ENCODE measurements at regions of chr20 and their contacts with region 1.

Region 1: GRCh38 chr20:56974499-56975236 is 291.8 kb downstream of the BMP7 start:
- DNase-seq: peak; percentile 80
- ATAC-seq: peak; percentile 72
- H3K4me3 Mint-ChIP-seq: peak overlapping the region; percentile 39
- H3K27ac Mint-ChIP-seq: no peak overlapping the region
- H3K4me1 Mint-ChIP-seq: peaks cover 43% of the 10 kb centered on the region
- H3K27me3 Mint-ChIP-seq: peaks cover 28% of the 10 kb centered on the region
- CTCF ChIP-seq: peak; percentile 62

Region 2: GRCh38 chr20:56554869-56555268 is 419.8 kb before region 1 on chr20:
- CTCF ChIA-PET with region 1: interaction called, 13 read pairs
- POLR2A ChIA-PET with region 1: no interaction called
- DNase-seq: no peak
- ATAC-seq: peak; percentile 73
- H3K4me3 Mint-ChIP-seq: no peak overlapping the region
- H3K27ac Mint-ChIP-seq: peak overlapping the region; percentile 9; the same call in 1 of the 2 replicates
- H3K4me1 Mint-ChIP-seq: peaks cover 8% of the 10 kb centered on the region
- H3K27me3 Mint-ChIP-seq: no peaks in the 10 kb centered on the region
- CTCF ChIP-seq: no peak

Region 3: GRCh38 chr20:56636716-56637115 is 338.0 kb before region 1 on chr20:
- CTCF ChIA-PET with region 1: interaction called, 10 read pairs
- POLR2A ChIA-PET with region 1: no interaction called
- DNase-seq: no peak
- ATAC-seq: no peak
- H3K4me3 Mint-ChIP-seq: no peak overlapping the region
- H3K27ac Mint-ChIP-seq: no peak overlapping the region
- H3K4me1 Mint-ChIP-seq: peaks cover 67% of the 10 kb centered on the region
- H3K27me3 Mint-ChIP-seq: peaks cover 23% of the 10 kb centered on the region
- CTCF ChIP-seq: no peak

Region 4: DNA sequence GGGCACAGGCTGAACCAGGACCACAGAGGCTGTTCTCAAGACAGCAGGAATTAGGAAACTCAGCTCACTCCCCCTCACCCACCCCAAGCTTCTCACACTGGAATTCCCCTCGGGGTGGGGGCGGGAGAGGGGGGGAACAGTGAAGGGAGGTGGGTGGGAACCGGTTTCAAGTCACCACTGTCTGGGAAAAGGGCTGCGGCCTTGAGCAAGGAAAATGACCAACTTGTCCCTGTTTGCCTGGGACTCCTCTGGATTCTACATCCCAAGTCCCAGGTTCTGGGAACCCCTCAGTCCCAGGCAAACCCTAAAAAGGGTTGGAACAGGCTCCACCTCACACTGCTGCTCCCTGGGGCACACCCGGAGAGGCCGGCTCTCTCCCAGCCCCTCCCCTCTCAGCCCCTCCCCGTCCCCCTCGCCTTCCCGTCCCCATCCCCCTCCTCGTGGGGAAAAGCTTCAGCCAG is 114.8 kb before region 1 on chr20:
- CTCF ChIA-PET with region 1: interaction called, 15 read pairs
- POLR2A ChIA-PET with region 1: no interaction called
- DNase-seq: peak; percentile 40
- ATAC-seq: peak; percentile 89
- H3K4me3 Mint-ChIP-seq: peak overlapping the region; percentile 49
- H3K27ac Mint-ChIP-seq: no peak overlapping the region
- H3K4me1 Mint-ChIP-seq: peaks cover 41% of the 10 kb centered on the region
- H3K27me3 Mint-ChIP-seq: peaks cover 20% of the 10 kb centered on the region
- CTCF ChIP-seq: no peak

Region 5: DNA sequence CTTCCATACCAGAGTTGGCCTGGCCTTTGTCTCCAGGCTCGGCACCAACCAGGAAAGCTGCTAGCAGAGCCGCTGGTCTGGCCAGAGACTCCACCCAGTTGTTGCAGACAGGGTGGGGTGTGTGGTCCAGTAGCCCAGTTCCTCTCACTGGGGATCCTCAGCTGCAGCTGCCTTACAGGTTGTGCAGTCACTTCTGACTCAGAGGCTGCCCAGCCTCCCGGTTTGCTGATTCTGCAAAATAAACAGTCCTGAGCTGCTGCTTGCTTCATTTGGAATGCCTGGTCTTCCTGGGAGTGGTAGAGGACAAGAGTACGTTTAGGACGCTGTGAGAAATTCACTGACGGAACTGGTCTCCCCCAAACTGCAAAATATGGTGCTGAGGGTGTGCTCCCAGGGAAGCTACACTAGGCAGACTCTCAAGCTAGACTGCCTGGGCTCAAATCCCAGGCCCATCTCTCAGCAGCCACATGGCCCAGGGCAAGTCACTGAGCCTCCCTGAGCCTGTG is 99.6 kb before region 1 on chr20:
- CTCF ChIA-PET with region 1: interaction called, 16 read pairs
- POLR2A ChIA-PET with region 1: no interaction called
- DNase-seq: peak; percentile 30
- ATAC-seq: peak; percentile 82
- H3K4me3 Mint-ChIP-seq: no peak overlapping the region
- H3K27ac Mint-ChIP-seq: no peak overlapping the region; the same call in 1 of the 2 replicates
- H3K4me1 Mint-ChIP-seq: peaks cover 23% of the 10 kb centered on the region
- H3K27me3 Mint-ChIP-seq: peaks cover 6% of the 10 kb centered on the region
- CTCF ChIP-seq: no peak

Region 6: GRCh38 chr20:56985286-56985685 is 10.6 kb after region 1 on chr20:
- CTCF ChIA-PET with region 1: interaction called, 16 read pairs
- POLR2A ChIA-PET with region 1: no interaction called
- DNase-seq: no peak
- ATAC-seq: no peak
- H3K4me3 Mint-ChIP-seq: no peak overlapping the region
- H3K27ac Mint-ChIP-seq: no peak overlapping the region
- H3K4me1 Mint-ChIP-seq: peaks cover 5% of the 10 kb centered on the region; the same call in 1 of the 2 replicates
- H3K27me3 Mint-ChIP-seq: peaks cover 6% of the 10 kb centered on the region; the same call in 1 of the 2 replicates
- CTCF ChIP-seq: no peak

Region 7: DNA sequence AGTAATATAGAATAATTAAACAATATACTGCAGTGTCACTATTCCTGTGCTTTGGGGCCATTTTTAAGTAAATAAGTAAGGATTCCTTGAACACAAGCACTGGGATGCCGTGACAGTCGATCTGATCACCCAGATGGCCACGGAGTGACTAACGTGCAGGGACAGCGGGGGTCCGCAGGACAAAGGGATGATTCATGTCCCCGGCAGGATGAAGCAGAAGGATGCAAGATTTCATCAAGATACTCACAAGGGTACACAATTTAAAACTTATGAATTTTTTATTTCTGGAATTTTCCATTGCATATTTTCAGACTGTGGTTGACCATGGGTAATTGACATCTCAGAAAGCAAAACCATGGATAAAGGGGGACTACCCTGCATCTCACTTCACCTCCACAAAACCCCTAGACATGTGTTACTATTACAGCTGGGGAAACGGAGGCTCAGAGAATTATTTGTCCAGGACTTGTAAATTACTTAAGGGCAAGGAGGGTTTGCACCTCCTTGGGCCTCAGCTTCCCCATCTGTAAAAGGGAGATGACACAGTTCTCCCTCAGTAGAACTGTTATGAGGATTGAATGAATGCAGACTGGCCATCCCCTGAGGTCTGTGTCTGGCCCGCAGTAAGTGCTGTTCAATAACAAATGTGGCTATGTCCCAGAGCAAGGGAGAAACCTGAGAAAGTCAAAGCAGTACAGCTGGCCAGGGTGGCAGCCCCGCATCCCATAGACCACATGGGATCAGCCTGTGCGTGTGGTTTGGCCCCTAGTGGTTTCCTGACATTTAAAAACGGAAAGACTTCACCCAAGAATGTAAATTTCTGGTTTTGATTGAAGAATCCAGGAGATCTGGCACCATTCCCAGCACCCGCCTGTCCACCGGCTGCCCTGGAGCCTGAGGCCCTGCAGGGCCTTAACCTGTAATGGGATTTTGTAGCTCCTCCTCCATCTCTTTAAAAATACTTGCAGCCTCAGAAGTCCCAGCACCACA is 56.2 kb after region 1 on chr20:
- CTCF ChIA-PET with region 1: no interaction called
- POLR2A ChIA-PET with region 1: no interaction called
- DNase-seq: no peak
- ATAC-seq: no peak
- H3K4me3 Mint-ChIP-seq: no peak overlapping the region
- H3K27ac Mint-ChIP-seq: no peak overlapping the region
- H3K4me1 Mint-ChIP-seq: peaks cover 28% of the 10 kb centered on the region
- H3K27me3 Mint-ChIP-seq: peaks cover 2% of the 10 kb centered on the region; the same call in 1 of the 2 replicates
- CTCF ChIP-seq: no peak

Region 8: DNA sequence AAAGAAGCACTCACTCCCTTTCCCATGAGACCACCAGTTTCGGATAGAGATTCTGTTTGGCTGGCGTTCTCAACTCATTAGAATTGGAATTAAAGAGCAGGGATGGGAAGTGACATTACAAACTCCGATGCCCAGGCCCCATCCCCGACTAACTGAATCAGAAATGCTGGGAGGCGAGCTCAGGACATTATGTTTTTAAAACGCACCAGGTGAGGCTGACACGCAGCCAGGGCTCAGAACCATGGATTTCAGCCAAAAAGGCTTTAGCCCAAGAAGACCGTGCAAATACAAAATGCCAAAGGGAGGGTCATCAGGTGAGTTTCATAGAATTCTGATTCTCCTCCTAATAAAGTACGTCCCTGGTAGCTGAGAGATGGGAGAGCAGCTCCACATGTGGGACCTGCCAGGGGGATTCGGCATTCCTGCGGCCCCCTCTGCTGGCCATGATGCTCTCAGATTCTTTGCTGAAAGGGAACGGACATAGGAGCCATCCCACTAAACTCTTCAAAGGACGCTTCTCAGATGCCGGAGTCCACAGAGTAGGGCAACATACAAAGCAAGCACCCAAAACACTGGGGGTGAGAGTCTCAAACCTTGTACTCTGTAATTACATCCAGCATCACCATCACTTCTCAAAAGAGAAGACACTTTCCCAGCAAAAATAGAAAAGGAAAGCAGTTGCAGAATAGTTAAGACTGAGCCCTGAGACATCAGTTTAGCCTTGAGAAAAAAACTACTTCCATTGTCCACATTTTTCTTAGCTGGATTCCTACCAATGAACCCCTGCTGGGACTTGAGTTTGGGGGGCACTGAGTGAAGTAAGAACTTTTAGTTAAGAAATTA is 86.6 kb after region 1 on chr20:
- CTCF ChIA-PET with region 1: interaction called, 16 read pairs
- POLR2A ChIA-PET with region 1: no interaction called
- DNase-seq: peak; percentile 80
- ATAC-seq: peak; percentile 94
- H3K4me3 Mint-ChIP-seq: no peak overlapping the region
- H3K27ac Mint-ChIP-seq: no peak overlapping the region
- H3K4me1 Mint-ChIP-seq: peaks cover 9% of the 10 kb centered on the region
- H3K27me3 Mint-ChIP-seq: no peaks in the 10 kb centered on the region; the same call in 1 of the 2 replicates
- CTCF ChIP-seq: peak; percentile 22; the same call in 1 of the 2 replicates